Posterior cingulate gyrus (tissue), 11 donors: ENCODE measurements at regions of chr16 and their contacts with region 1.

Region 1: GRCh38 chr16:23640931-23641765 is at the starts of genes DCTN5 and PALB2:
- DNase-seq: peak; percentile 89 to 99 (median 94)

Region 2: DNA sequence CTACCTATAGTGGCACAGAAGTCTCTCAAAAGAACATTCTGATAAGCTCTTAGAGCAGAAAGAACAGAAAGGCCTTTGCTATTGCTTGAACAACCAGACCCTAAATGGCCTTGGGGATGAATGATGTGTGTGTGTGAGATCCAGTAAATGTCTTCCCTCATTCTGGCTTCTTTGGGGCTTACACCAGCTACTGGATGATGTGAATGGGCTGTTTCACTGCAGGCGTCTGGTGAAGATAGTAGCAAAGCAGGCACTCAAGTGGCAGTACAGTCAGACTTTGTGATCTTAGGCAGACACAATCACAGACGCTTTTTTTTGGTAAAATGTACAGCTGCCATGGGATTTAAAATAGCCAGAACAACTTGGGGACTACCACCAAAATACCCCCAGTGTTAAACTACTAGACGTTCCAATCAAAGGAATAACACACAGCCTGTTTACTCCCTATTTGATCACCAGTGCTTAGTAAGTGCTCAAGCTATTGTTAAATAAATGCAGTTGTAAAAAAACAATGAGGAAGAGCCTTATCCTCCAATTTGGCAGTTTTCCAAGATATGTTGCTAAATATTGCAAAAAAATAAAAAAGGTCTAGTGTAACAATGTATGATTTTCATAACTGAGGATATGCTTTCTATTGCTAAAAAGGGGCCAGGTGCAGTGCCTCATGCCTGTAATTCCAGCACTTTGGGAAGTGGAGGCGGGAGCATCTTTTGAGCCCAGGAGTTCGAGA is 62.9 kb before region 1 on chr16:
- intact Hi-C with region 1: no loop called
- DNase-seq: no peak

Region 3: DNA sequence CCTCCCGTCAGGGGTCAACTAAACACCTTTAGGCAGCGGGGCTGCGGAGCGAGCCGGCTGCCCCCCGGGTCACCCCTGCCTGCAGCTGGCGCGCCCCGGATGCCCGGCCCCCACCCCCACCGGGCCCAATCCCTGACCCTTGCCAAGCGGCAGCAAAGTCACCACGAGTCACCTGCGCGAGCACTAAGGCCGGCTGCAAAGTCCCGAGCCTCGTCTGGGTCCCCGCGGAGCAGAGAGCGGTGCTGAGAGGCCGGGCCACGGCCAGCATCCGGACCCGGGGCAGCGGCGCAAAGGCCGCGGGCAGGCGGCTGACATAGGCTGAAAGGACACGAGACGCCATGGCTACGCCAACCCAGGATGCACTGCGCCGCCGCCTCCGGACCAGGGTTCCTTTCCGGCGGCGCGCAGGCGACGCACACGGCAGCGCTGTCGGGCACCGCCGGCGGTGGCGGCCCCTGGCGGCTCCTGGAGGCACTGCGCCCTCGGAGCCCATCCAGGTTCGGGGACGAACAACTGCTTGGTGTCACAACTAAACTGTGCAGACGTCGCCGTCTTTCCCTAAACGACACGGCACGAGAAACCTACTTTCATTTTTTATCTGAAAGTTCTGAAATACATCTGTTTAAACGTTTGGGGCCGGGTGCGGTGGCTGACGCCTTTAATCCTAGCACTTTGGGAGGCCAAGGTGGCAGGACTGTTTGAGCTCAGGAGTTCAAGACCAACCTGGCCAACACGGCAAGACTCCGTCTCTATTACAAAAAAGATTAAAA is 45.0 kb before region 1 on chr16 and contains the start of gene NDUFAB1:
- intact Hi-C with region 1: loop called (anchors 2 kb)
- DNase-seq: peak; percentile 86 to 98 (median 91)

Region 4: DNA sequence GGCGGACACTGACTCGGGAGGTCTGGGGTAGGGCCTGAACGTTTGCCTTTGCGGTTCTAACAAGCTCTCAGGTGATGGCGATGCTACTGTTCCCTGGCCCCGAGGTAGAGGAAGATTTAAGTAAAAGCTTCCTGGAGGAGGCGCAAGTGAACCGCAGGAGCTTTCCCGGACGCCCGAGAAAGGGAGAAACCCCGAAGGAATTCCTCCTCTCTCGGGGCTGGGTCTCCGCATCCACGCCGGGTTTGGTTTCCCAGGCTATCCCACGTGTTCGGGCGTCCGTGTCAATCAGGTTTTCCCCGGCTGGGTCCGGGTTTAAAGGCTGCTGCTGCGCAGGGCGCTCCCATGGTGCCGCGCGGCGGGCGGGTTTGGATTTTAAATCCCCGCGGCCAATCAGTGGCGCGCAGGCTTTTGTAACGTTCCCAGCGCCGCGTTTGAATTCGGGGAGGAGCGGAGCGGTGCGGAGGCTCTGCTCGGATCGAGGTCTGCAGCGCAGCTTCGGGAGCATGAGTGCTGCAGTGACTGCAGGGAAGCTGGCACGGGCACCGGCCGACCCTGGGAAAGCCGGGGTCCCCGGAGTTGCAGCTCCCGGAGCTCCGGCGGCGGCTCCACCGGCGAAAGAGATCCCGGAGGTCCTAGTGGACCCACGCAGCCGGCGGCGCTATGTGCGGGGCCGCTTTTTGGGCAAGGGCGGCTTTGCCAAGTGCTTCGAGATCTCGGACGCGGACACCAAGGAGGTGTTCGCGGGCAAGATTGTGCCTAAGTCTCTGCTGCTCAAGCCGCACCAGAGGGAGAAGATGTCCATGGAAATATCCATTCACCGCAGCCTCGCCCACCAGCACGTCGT is 37.5 kb after region 1 on chr16 and contains the start of gene PLK1:
- intact Hi-C with region 1: no loop called
- DNase-seq: peak; percentile 59 to 97 (median 79)